K562 (cell line): ENCODE measurements at regions of chr1 and their contacts with region 1.

Region 1: GRCh38 chr1:26999440-26999987 is 6.0 kb downstream of the TRNP1 start:
- DNase-seq: no peak
- ATAC-seq: no peak
- H3K4me3 ChIP-seq: no peak overlapping the region
- H3K27ac ChIP-seq: no peak overlapping the region
- H3K4me1 ChIP-seq: peaks cover 14 to 17% of the 10 kb centered on the region in 2 experiments
- H3K27me3 ChIP-seq: peaks cover 2 to 9% of the 10 kb centered on the region in 2 experiments; a peak in 4 of 5 replicates
- CTCF ChIP-seq: no peak
- EP300 ChIP-seq: no peak
- POLR2A ChIP-seq: no peak
- RAD21 ChIP-seq: no peak

Region 2: DNA sequence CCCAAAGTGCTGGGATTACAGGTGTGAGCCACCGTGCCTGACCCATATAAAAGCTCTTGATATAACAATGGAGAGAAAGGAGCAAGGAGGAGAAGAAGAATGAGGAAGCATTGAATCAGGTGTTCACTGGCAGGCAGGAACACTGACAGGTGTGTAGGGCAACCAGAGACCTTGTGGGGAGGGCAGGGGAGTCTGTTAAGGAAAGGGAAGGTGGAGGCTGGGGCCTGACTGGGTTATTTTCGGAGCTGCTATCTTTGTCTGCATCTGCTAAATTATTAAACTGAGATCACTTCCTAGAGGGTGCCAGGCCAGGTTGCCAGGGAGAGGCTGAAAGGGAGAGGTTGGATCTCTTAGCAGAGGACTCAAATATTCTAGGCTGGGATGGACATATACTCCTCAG is 12.9 kb before region 1 on chr1:
- CTCF ChIA-PET with region 1: no interaction called
- POLR2A ChIA-PET with region 1: interaction called, 12 read pairs
- in situ Hi-C with region 1: no loop called
- intact Hi-C with region 1: no loop called
- DNase-seq: no peak
- ATAC-seq: no peak
- H3K4me3 ChIP-seq: no peak overlapping the region
- H3K27ac ChIP-seq: no peak overlapping the region
- H3K4me1 ChIP-seq: peaks cover 0 to 6% of the 10 kb centered on the region in 2 experiments; a peak in 2 of 5 replicates
- H3K27me3 ChIP-seq: peaks cover 33 to 46% of the 10 kb centered on the region in 2 experiments; a peak in 4 of 5 replicates
- CTCF ChIP-seq: no peak
- EP300 ChIP-seq: no peak
- POLR2A ChIP-seq: no peak
- RAD21 ChIP-seq: no peak

Region 3: GRCh38 chr1:27037515-27037914 is 38.0 kb after region 1 on chr1:
- CTCF ChIA-PET with region 1: interaction called, 20 read pairs
- POLR2A ChIA-PET with region 1: interaction called, 4 read pairs
- in situ Hi-C with region 1: loop called (anchors 5 kb)
- intact Hi-C with region 1: loop called (anchors 1 kb)
- DNase-seq: no peak
- ATAC-seq: no peak
- H3K4me3 ChIP-seq: no peak overlapping the region
- H3K27ac ChIP-seq: no peak overlapping the region
- H3K4me1 ChIP-seq: no peaks in the 10 kb centered on the region; a peak in 1 of 5 replicates
- H3K27me3 ChIP-seq: no peaks in the 10 kb centered on the region
- CTCF ChIP-seq: no peak
- EP300 ChIP-seq: no peak
- POLR2A ChIP-seq: no peak
- RAD21 ChIP-seq: no peak

Region 4: DNA sequence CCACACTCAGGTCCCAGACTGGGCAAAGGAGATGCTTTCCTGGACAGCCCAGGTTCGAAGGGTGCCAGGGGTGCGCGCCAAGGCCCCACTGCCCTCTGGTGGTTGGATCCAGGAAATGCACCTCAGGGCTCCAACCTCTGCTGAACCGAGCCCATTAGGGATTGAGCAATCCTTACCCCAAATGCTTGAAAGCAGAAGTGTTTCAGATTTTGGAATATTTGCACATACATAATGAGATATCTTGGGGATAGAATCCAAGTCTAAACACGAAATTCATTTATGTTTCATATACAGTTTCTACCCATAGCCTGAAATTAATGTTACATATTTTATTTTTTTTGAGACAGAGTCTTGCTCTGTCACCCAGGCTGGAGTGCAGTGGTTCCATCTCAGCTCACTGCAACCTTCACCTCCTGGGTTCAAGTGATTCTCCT is 98.0 kb after region 1 on chr1:
- CTCF ChIA-PET with region 1: interaction called, 45 read pairs
- POLR2A ChIA-PET with region 1: interaction called, 4 read pairs
- in situ Hi-C with region 1: loop called (anchors 5 kb)
- intact Hi-C with region 1: loop called (anchors 1 kb)
- DNase-seq: peak; percentile 86 to 90 (median 88)
- ATAC-seq: peak; percentile 84
- H3K4me3 ChIP-seq: no peak overlapping the region
- H3K27ac ChIP-seq: no peak overlapping the region
- H3K4me1 ChIP-seq: peaks cover 18 to 41% of the 10 kb centered on the region in 2 experiments
- H3K27me3 ChIP-seq: no peaks in the 10 kb centered on the region; a peak in 1 of 5 replicates
- CTCF ChIP-seq: peak; percentile 98 to 99 (median 99)
- EP300 ChIP-seq: no peak; the same call in 1 of the 2 replicates
- POLR2A ChIP-seq: no peak
- RAD21 ChIP-seq: peak; percentile 100